Stomach (tissue), 19 donors: ENCODE measurements at regions of chr3 and their contacts with region 1.

Region 1: GRCh38 chr3:197305854-197306253 is 7.4 kb upstream of the DLG1 start:
- DNase-seq: no peak
- H3K4me3 ChIP-seq: no peak overlapping the region
- H3K27ac ChIP-seq: no peak overlapping the region
- H3K4me1 ChIP-seq: peaks cover 14 to 49% (median 23%) of the 10 kb centered on the region in 4 donors
- H3K27me3 ChIP-seq: no peaks in the 10 kb centered on the region
- CTCF ChIP-seq: no peak
- EP300 ChIP-seq: no peak
- POLR2A ChIP-seq: no peak

Region 2: GRCh38 chr3:197367081-197367780 is 61.4 kb after region 1 on chr3:
- intact Hi-C with region 1: loop called (anchors 10 kb)
- DNase-seq: peak in 1 of 2 donors; percentile 74
- H3K4me3 ChIP-seq: no peak overlapping the region
- H3K27ac ChIP-seq: peak overlapping the region in 1 of 5 donors; percentile 13
- H3K4me1 ChIP-seq: peaks cover 9 to 37% (median 19%) of the 10 kb centered on the region in 4 donors
- H3K27me3 ChIP-seq: no peaks in the 10 kb centered on the region
- CTCF ChIP-seq: no peak
- EP300 ChIP-seq: no peak
- POLR2A ChIP-seq: no peak